Activated CD4-positive, alpha-beta T cell treated with anti-CD3 and anti-CD28 coated beads for 36 hours (primary cell): ENCODE measurements at regions of chr11 and their contacts with region 1.

Region 1: GRCh38 chr11:128210148-128210940 is 377.0 kb downstream of the ETS1 start:
- DNase-seq: peak; percentile 11
- ATAC-seq: peak; percentile 72
- H3K4me3 Mint-ChIP-seq: no peak overlapping the region
- H3K27ac Mint-ChIP-seq: no peak overlapping the region
- H3K4me1 Mint-ChIP-seq: peaks cover 27% of the 10 kb centered on the region
- H3K27me3 Mint-ChIP-seq: no peaks in the 10 kb centered on the region

Region 2: GRCh38 chr11:128226106-128226716 is 15.9 kb after region 1 on chr11:
- CTCF ChIA-PET with region 1: interaction called, 3 read pairs
- POLR2A ChIA-PET with region 1: no interaction called
- intact Hi-C with region 1: loop called in 1 of 2 experiments (anchors 2 kb)
- DNase-seq: peak; percentile 62
- ATAC-seq: peak; percentile 54
- H3K4me3 Mint-ChIP-seq: no peak overlapping the region
- H3K27ac Mint-ChIP-seq: peak overlapping the region; percentile 55
- H3K4me1 Mint-ChIP-seq: peaks cover 52% of the 10 kb centered on the region
- H3K27me3 Mint-ChIP-seq: no peaks in the 10 kb centered on the region